CD8-positive, alpha-beta memory T cell (primary cell): ENCODE measurements at regions of chr7 and their contacts with region 1.

Region 1: DNA sequence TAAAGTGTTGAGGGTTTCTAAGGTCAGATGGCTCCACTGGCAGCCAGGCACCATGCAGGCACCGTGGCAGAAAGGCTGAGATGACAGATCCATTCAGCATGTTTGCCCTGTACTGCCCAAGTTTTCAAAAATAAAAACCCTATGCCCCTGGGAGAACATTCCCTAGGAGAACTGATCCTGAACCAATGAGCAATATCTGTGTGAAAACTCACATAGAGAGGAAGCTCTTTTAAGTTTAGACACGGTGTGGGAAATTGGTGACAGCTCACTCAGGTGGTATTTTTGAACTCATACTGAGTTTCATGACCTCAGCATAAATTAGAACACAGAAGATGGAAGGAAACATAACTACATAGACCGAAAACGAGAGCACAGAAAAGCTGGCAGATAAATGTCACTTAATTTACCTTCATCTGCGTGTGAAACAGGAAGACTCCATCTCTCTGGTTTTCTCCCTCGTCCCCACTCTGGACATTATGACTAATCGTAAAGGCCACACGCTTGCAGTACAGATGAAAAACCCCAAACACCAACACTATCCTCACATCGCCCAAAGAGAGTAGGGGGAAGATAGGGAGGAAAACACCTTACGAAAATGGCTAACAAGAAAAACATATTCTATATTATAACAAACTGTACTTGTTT is 127.8 kb downstream of the ICA1 start:
- DNase-seq: peak in 1 of 5 donors; percentile 32
- H3K4me3 ChIP-seq: peak overlapping the region; percentile 14
- H3K4me3 Mint-ChIP-seq: peak overlapping the region in 6 of 7 donors; percentile 10 to 61 (median 50)
- H3K27ac ChIP-seq: peak overlapping the region; percentile 49
- H3K27ac Mint-ChIP-seq: peak overlapping the region; percentile 89 to 100 (median 97)
- H3K4me1 ChIP-seq: peaks cover 57% of the 10 kb centered on the region
- H3K4me1 Mint-ChIP-seq: peaks cover 53 to 77% (median 69%) of the 10 kb centered on the region in 3 donors
- H3K27me3 ChIP-seq: no peaks in the 10 kb centered on the region
- H3K27me3 Mint-ChIP-seq: no peaks in the 10 kb centered on the region

Region 2: DNA sequence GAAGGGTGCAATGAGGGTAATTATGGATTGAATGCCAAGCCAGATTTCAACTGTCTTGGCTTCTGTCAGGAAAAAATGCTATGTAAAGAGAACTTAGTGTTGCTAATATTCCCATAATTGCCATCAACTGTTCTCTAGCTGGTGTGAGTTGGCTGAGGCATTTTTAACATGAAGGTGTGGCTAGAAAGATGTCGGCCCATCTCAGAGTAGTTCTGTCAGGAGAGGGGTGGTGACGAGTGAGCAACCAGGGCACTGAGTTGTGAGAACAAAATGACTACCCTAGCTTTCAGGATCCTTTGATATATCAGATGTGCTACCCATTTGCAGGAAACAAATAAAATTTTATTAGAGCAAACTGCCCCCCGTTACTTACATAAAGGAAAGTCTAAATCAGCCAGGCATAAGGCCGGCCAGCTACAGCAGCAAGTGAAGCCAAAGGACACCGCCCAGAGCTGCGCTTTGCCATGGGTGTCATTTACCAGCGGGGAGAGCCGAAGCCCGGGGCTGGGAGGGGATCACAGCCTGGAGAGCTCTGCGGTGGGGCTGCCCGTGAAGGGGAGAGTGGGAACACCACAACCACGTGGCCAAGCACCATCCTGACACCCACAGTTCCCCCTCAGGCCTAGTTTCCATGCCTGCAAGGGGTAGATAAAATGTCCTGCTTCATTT is 13.7 kb before region 1 on chr7:
- CTCF ChIA-PET with region 1: interaction called, 14 read pairs
- POLR2A ChIA-PET with region 1: interaction called, 13 read pairs
- DNase-seq: no peak
- H3K4me3 ChIP-seq: no peak overlapping the region
- H3K4me3 Mint-ChIP-seq: peak overlapping the region in 1 of 7 donors; percentile 44
- H3K27ac ChIP-seq: no peak overlapping the region
- H3K27ac Mint-ChIP-seq: peak overlapping the region in 4 of 8 donors; percentile 30 to 73 (median 50)
- H3K4me1 ChIP-seq: peaks cover 45% of the 10 kb centered on the region
- H3K4me1 Mint-ChIP-seq: peaks cover 49 to 89% (median 81%) of the 10 kb centered on the region in 3 donors
- H3K27me3 ChIP-seq: no peaks in the 10 kb centered on the region
- H3K27me3 Mint-ChIP-seq: no peaks in the 10 kb centered on the region